Upper lobe of right lung (tissue), 1 donor: ENCODE measurements at regions of chr12 and their contacts with region 1.

Region 1: GRCh38 chr12:106223485-106224354 is 24.1 kb downstream of the CKAP4 start:
- DNase-seq: peak; percentile 76
- ATAC-seq: peak; percentile 88
- H3K4me3 ChIP-seq: no peak overlapping the region
- H3K27ac ChIP-seq: no peak overlapping the region
- H3K4me1 ChIP-seq: peaks cover 10% of the 10 kb centered on the region
- H3K27me3 ChIP-seq: no peaks in the 10 kb centered on the region
- CTCF ChIP-seq: peak; percentile 96

Region 2: DNA sequence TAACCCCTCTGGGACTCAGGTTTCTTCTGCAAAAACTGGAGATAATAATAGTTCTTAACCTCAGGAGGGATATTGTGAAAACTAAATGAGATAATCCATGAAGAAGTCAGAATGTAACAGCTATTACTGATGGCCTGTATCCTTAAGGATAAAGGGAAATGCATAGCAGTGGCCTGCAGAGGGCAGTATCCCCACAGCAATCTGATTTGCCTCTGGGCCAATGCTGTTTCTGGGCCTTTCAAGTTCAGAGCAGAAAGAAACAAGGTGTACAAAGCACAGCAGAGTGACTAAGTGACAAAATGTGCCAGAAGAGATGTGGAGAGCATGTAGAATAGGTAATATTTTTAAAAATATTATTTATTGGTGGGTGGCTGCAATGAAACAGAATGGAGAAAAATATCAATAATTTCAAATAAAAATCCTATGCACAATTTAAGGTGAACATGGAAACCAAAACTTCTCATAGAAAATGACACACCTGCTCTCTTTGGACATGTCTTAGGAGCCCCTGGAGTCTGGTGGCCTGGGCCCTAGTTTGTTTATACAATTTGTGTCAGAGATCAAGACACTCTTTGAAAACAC is 803.0 kb before region 1 on chr12:
- intact Hi-C with region 1: loop called (anchors 10 kb)
- DNase-seq: no peak
- ATAC-seq: peak; percentile 93
- H3K4me3 ChIP-seq: no peak overlapping the region
- H3K27ac ChIP-seq: no peak overlapping the region
- H3K4me1 ChIP-seq: no peaks in the 10 kb centered on the region
- H3K27me3 ChIP-seq: no peaks in the 10 kb centered on the region
- CTCF ChIP-seq: peak; percentile 94

Region 3: DNA sequence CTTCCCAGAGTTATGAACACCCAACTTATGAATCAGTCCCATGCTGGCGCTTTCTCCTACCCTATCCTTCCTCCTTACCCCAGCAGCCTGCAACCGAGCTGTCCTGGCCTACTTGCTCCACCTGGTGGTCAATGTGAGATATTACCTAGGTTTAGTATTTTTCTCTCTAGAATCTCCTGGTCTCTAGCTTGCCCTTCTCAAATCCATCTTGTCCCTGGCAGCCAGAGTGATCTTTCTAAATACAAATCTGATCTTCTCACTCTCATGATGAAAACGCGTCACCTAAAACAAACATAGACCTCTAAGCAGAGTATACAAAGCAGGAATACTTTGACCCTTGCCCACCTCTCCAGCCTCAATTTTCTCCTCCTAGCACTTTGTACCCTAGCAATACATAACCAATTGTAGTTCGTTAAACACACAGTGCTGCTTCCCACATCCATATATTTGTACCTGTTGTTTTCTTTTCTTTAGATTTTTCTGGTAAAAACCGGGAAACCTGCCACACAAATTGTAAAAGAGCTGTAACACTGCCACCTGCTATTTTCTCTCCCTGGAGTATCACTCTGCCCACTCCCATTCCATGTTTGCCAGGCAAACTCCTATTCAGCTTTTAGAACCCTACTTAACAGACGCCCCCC is 58.9 kb after region 1 on chr12:
- intact Hi-C with region 1: loop called (anchors 5 kb)
- DNase-seq: no peak
- ATAC-seq: peak; percentile 98
- H3K4me3 ChIP-seq: no peak overlapping the region
- H3K27ac ChIP-seq: no peak overlapping the region
- H3K4me1 ChIP-seq: no peaks in the 10 kb centered on the region
- H3K27me3 ChIP-seq: no peaks in the 10 kb centered on the region
- CTCF ChIP-seq: peak; percentile 73